ENCODE measurements at regions of chr1 and their contacts with region 1.

Region 1: GRCh38 chr1:112369392-112370285 is 26.4 kb upstream of the CTTNBP2NL start:
- DNase-seq: peak; percentile 66 to 71
- ATAC-seq: peak; percentile 93 to 99
- H3K4me3 ChIP-seq: no peak overlapping the region
- H3K27ac ChIP-seq: no peak overlapping the region
- H3K4me1 ChIP-seq: no peaks in the 10 kb centered on the region
- H3K27me3 ChIP-seq: no peaks in the 10 kb centered on the region
- CTCF ChIP-seq: peak; percentile 77 to 94 (median 86)
- POLR2A ChIP-seq: no peak

Region 2: DNA sequence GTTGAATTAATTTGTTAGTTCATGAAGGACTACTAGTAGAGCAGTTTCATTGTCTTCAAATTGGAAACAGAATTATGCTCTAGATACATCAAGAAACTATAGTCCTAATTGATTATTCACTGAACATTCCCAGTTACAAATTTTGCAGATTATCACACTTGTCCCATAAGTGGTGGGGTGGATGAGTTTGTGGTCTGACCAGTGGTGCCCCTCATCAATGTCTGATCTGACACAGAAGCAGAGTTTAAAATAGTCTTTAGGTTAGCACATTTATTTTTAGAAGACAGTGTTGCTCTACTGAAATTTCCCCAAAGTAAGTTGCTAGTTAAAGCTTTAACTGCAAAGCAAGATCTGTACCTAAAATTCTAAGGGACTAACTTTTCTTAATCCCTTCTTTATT is 673.3 kb before region 1 on chr1:
- in situ Hi-C with region 1: no loop called
- intact Hi-C with region 1: no loop called
- DNase-seq: no peak
- ATAC-seq: no peak
- H3K4me3 ChIP-seq: no peak overlapping the region
- H3K27ac ChIP-seq: no peak overlapping the region
- H3K4me1 ChIP-seq: no peaks in the 10 kb centered on the region
- H3K27me3 ChIP-seq: no peaks in the 10 kb centered on the region
- CTCF ChIP-seq: no peak
- POLR2A ChIP-seq: no peak

Region 3: DNA sequence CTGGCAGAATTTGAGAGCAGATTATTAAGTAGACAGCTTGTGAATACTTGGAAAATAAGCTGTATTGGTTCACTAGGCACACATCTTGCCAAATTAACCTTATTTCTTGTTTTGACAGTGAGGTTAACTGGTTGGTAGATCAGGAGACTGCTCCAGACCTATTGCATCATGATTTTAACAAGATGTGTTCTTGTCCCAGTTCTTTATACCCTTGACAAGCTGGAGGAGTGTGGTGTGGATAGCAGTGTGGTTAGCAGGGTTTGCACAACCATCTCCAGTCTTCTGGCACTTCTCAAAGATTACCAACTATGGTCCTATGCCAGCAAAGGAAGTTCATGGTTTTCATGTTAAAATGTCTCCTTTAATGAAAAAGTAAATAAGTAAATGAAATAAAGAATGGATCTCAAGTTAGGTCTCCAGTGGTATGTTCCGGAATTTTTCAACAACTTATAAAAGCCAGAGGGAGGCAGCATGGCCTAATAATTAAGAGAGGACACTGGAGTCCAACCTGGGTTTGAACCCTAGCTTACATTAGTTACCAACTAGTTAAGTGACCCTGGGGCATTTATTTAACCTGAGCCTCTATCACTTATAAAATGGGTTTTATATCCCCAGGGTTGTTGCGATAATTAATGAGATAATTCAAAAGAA is 579.8 kb before region 1 on chr1:
- in situ Hi-C with region 1: loop called in 1 of 4 experiments (anchors 10 kb)
- intact Hi-C with region 1: no loop called
- DNase-seq: no peak
- ATAC-seq: peak in 1 of 2 donors; percentile 78
- H3K4me3 ChIP-seq: no peak overlapping the region
- H3K27ac ChIP-seq: peak overlapping the region in 1 of 4 donors; percentile 16
- H3K4me1 ChIP-seq: no peaks in the 10 kb centered on the region
- H3K27me3 ChIP-seq: no peaks in the 10 kb centered on the region
- CTCF ChIP-seq: no peak
- POLR2A ChIP-seq: no peak